HCT116 (cell line): ENCODE measurements at regions of chr6 and their contacts with region 1.

Region 1: GRCh38 chr6:123715006-123715875 is 78.5 kb upstream of the TRDN start:
- DNase-seq: peak; percentile 7
- ATAC-seq: no peak
- H3K4me3 ChIP-seq: no peak overlapping the region
- H3K27ac ChIP-seq: no peak overlapping the region
- H3K4me1 ChIP-seq: no peaks in the 10 kb centered on the region
- H3K27me3 ChIP-seq: peaks cover 15% of the 10 kb centered on the region; the same call in 1 of the 2 replicates
- CTCF ChIP-seq: peak; percentile 16 to 65 (median 41); a peak in 3 of 6 replicates
- POLR2A ChIP-seq: no peak
- RAD21 ChIP-seq: peak; percentile 65

Region 2: DNA sequence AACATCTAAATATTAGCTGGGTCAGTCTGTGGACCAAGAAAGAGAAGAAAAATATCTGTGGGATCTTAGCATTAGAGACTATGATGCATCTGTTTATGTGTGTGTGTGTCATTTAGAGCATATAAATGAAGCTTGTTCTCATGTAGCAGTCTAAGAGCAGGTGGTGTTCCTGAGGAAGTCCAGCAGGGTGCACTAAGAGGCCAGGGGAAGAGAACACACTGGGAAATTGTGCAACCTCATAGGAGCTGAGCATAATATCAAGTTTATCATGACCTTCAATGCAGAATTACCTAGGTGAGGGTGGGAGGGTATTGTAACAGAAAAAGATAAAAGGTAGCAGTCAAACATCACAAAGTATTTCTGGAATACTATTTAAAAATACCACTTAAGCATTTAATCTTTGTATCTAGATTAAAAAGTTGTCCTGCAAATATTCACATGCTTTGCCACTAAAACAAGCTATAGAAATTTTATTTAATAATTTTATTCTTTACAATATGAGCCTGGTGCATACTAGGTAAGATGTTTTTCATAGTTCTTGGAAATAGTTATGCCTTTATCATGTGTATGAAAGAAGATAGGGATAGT is 845.7 kb before region 1 on chr6:
- CTCF ChIA-PET with region 1: interaction called, 25 read pairs
- POLR2A ChIA-PET with region 1: no interaction called
- RAD21 ChIA-PET with region 1: interaction called, 3 read pairs
- intact Hi-C with region 1: loop called (anchors 5 kb)
- DNase-seq: peak; percentile 43
- ATAC-seq: peak; percentile 94
- H3K4me3 ChIP-seq: no peak overlapping the region
- H3K27ac ChIP-seq: no peak overlapping the region
- H3K4me1 ChIP-seq: 0 out of 4 replicates have a peak, but pooled peaks cover 0 to 4% of the 10 kb centered on the region in 2 experiments
- H3K27me3 ChIP-seq: peaks cover 25% of the 10 kb centered on the region
- CTCF ChIP-seq: peak; percentile 53 to 72 (median 69); a peak in 5 of 6 replicates
- POLR2A ChIP-seq: no peak
- RAD21 ChIP-seq: peak; percentile 82

Region 3: DNA sequence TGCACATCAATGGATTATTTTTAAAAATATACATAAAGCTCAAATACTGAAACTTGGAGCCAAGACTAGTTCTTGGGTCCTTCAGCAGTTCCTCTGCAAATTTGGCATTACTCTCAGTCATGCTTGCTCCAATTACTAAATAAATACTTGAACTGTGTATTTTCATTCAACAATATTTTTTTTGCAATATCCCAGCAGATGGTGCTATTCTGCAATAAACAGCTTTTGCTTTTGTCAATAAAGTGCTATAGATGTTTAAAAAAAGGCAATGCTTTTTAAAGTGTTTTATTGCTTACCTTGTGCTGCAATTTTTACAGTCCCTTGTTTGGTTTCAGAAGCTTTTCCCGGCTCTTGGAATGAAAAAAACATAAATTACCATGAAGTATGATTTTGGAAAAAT is 321.9 kb before region 1 on chr6:
- CTCF ChIA-PET with region 1: interaction called, 17 read pairs
- POLR2A ChIA-PET with region 1: no interaction called
- RAD21 ChIA-PET with region 1: no interaction called
- intact Hi-C with region 1: loop called (anchors 1 kb)
- DNase-seq: no peak
- ATAC-seq: no peak
- H3K4me3 ChIP-seq: no peak overlapping the region
- H3K27ac ChIP-seq: no peak overlapping the region
- H3K4me1 ChIP-seq: no peaks in the 10 kb centered on the region
- H3K27me3 ChIP-seq: peaks cover 29% of the 10 kb centered on the region; the same call in 1 of the 2 replicates
- CTCF ChIP-seq: peak; percentile 26 to 53 (median 28); a peak in 3 of 6 replicates
- POLR2A ChIP-seq: no peak
- RAD21 ChIP-seq: peak; percentile 56

Region 4: GRCh38 chr6:123415844-123416468 is 299.3 kb before region 1 on chr6:
- CTCF ChIA-PET with region 1: interaction called, 33 read pairs
- POLR2A ChIA-PET with region 1: no interaction called
- RAD21 ChIA-PET with region 1: interaction called, 3 read pairs
- intact Hi-C with region 1: loop called (anchors 2 kb)
- DNase-seq: peak; percentile 50
- ATAC-seq: peak; percentile 65; the same call in 1 of the 2 replicates
- H3K4me3 ChIP-seq: no peak overlapping the region
- H3K27ac ChIP-seq: no peak overlapping the region
- H3K4me1 ChIP-seq: no peaks in the 10 kb centered on the region
- H3K27me3 ChIP-seq: peaks cover 31% of the 10 kb centered on the region
- CTCF ChIP-seq: peak; percentile 39 to 70 (median 62); a peak in 5 of 6 replicates
- POLR2A ChIP-seq: no peak
- RAD21 ChIP-seq: peak; percentile 58